Mammary epithelial cell (primary cell): ENCODE measurements at regions of chrX and their contacts with region 1.

Region 1: DNA sequence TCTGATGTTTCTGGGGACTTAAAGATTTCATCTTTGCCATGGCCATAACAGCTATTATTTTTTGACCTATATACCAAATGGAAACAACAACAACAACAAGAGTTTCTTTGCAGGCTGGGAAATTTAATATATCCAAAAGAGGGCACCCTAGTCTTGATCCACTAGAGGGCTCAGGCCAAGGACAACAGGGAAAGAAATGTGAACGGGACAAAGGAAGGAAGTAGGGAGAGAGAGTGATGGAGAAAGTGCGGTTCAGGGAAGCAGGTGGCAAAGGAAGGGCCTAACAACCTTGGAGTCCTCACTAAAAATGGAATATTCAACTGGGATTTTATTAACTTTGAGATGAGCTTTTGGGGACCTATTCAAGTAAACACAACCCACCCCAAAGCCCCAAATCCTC is 67.8 kb upstream of the SCML1 start:
- DNase-seq: no peak
- H3K4me3 ChIP-seq: no peak overlapping the region
- H3K27ac ChIP-seq: no peak overlapping the region
- H3K4me1 ChIP-seq: no peaks in the 10 kb centered on the region
- H3K27me3 ChIP-seq: no peaks in the 10 kb centered on the region
- CTCF ChIP-seq: no peak

Region 2: GRCh38 chrX:17725181-17725580 is 55.7 kb after region 1 on chrX:
- CTCF ChIA-PET with region 1: no interaction called
- dilution Hi-C with region 1: loop called (anchors 5 kb)
- in situ Hi-C with region 1: no loop called
- intact Hi-C with region 1: no loop called
- DNase-seq: no peak
- H3K4me3 ChIP-seq: no peak overlapping the region
- H3K27ac ChIP-seq: no peak overlapping the region
- H3K4me1 ChIP-seq: no peaks in the 10 kb centered on the region
- H3K27me3 ChIP-seq: no peaks in the 10 kb centered on the region
- CTCF ChIP-seq: no peak